ENCODE measurements at regions of chr17 and their contacts with region 1.

Region 1: DNA sequence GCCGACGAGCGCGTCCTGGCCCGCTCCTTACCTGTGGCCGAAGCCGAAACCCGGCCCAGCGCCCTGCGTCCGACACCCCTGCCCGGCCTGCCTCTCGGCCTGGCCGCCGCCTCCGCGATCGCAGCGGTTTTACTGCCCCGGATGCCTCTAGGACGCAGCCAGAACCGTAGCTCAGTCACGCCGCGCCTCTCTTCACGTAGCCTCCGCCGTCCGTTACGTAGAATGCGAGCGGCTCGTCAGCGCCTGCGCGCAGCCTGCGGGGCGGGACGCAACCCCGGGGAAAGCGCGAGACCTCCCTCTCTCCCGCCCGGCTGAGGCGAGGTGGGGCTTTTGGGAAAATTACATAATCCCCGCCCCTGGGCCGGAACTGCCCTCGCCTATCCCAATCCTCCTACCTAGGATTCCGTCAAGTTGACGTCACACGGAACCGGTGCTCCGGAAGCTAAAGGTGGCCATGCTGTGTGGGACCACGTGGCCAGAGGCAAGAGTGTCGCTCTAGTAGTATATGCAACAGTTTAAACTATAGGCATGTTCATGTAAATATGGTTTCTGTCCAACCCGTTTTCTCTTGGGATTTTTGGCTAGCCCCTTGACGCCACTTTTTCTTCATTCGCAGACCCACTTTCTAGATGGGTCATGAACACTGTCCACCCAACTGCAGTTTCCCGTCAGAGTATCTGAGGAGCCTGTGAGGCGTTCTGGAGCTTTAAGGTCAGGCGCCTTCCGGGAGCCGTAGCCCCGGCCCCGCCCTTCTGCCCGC is at the start of gene CCDC47:
- DNase-seq: peak; percentile 94 to 99 (median 97)
- ATAC-seq: peak; percentile 85
- H3K4me3 ChIP-seq: peak within 1 kb of the TSS; percentile 84
- H3K27ac ChIP-seq: peak within 1 kb of the TSS; percentile 99
- H3K4me1 ChIP-seq: peaks cover 9 to 24% of the 10 kb centered on the region in 2 experiments
- H3K27me3 ChIP-seq: no peaks in the 10 kb centered on the region
- CTCF ChIP-seq: peak in 1 of 3 experiments; percentile 19; a peak in 1 of 6 replicates
- EP300 ChIP-seq: peak; percentile 23; the same call in 1 of the 2 replicates
- POLR2A ChIP-seq: peak; percentile 91
- RAD21 ChIP-seq: no peak
- polyA plus RNA-seq, gene CCDC47: 15.5 to 20.5 TPM

Region 2: GRCh38 chr17:63549946-63550807 is 223.4 kb before region 1 on chr17 and contains the start of gene DCAF7:
- CTCF ChIA-PET with region 1: no interaction called
- POLR2A ChIA-PET with region 1: interaction called, 4 read pairs
- in situ Hi-C with region 1: no loop called
- intact Hi-C with region 1: loop called (anchors 5 kb)
- DNase-seq: peak; percentile 99 to 100 (median 100)
- ATAC-seq: peak; percentile 92
- H3K4me3 ChIP-seq: peak within 1 kb of the TSS; percentile 85
- H3K27ac ChIP-seq: peak within 1 kb of the TSS; percentile 97
- H3K4me1 ChIP-seq: peaks cover 12 to 22% of the 10 kb centered on the region in 2 experiments
- H3K27me3 ChIP-seq: no peaks in the 10 kb centered on the region
- CTCF ChIP-seq: peak in 1 of 3 experiments; percentile 5; a peak in 1 of 6 replicates
- EP300 ChIP-seq: no peak
- POLR2A ChIP-seq: peak; percentile 90
- RAD21 ChIP-seq: no peak
- polyA plus RNA-seq, gene DCAF7: 35.9 to 38.0 TPM

Region 3: GRCh38 chr17:63741221-63742049 is 32.1 kb before region 1 on chr17 and contains the start of gene STRADA:
- CTCF ChIA-PET with region 1: no interaction called
- POLR2A ChIA-PET with region 1: interaction called, 33 read pairs
- in situ Hi-C with region 1: no loop called
- intact Hi-C with region 1: loop called (anchors 2 kb)
- DNase-seq: peak; percentile 97 to 99 (median 98)
- ATAC-seq: peak; percentile 96
- H3K4me3 ChIP-seq: peak within 1 kb of the TSS; percentile 84
- H3K27ac ChIP-seq: peak within 1 kb of the TSS; percentile 87
- H3K4me1 ChIP-seq: peaks cover 4 to 18% of the 10 kb centered on the region in 2 experiments; a peak in 3 of 5 replicates
- H3K27me3 ChIP-seq: no peaks in the 10 kb centered on the region
- CTCF ChIP-seq: no peak
- EP300 ChIP-seq: no peak
- POLR2A ChIP-seq: peak; percentile 88
- RAD21 ChIP-seq: peak in 1 of 2 experiments; percentile 15; a peak in 2 of 4 replicates
- polyA plus RNA-seq, gene STRADA: 6.6 to 12.5 TPM

Region 4: DNA sequence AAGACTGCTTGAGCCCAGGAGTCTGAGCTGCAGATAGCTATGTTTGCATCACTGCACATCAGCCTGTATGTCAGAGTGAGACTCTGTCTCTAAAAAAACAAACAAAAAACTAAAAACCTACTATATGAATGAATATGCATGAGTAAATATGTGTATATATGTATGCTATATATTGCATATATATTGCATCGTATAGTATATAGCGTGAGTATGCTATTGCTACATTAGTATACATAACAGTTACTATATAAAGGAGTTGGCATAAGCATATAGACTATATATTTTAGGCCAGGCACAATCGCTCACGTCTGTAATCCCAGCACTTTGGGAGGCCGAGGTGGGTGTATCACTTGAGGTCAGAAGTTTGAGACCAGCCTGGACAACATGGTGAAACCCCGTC is 16.5 kb after region 1 on chr17:
- CTCF ChIA-PET with region 1: no interaction called
- POLR2A ChIA-PET with region 1: interaction called, 82 read pairs
- in situ Hi-C with region 1: no loop called
- intact Hi-C with region 1: no loop called
- DNase-seq: no peak
- ATAC-seq: no peak
- H3K4me3 ChIP-seq: no peak overlapping the region
- H3K27ac ChIP-seq: no peak overlapping the region
- H3K4me1 ChIP-seq: no peaks in the 10 kb centered on the region
- H3K27me3 ChIP-seq: no peaks in the 10 kb centered on the region
- CTCF ChIP-seq: no peak
- EP300 ChIP-seq: no peak
- POLR2A ChIP-seq: no peak
- RAD21 ChIP-seq: no peak

Region 5: DNA sequence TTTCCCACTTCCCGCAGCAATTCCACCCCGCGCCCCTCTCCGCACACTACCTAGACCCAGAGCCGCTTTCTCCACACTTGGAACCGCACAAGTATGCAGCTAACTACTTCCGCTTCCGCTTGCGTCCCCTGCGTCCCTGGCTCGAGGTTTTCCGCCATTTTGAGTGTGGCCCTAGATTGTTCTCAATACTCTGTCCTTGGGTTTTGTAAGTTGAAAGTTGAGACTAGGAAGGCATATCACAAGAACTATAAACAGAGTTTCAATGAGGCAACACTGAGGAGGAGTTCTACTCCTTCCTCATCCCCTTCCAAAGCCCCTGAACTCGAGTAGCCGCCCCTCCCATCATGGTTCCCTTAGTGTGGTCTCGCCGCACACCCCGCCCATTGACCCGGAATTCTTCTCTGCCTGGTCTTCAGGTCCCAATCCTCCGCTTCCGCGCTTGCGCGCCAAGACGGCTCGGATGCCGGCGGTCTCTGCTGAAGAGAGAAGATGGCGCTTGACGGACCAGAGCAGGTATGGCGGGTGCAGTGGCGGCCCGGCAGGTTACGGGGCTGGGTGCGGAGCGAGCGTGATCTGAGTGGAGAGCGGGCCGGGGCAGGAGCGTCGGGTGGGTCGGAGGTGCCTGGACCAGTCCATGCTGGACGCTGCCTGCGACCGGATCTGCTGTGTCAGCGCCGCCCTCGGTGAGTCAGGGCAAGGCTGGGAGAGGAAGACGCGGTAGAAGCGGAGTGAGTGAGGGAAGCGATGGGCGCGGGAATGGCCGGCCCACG is 53.6 kb after region 1 on chr17 and contains the starts of genes FTSJ3 and PSMC5:
- CTCF ChIA-PET with region 1: no interaction called
- POLR2A ChIA-PET with region 1: interaction called, 16 read pairs
- in situ Hi-C with region 1: no loop called
- intact Hi-C with region 1: no loop called
- DNase-seq: peak; percentile 82 to 97 (median 88)
- ATAC-seq: peak; percentile 94
- H3K4me3 ChIP-seq: peak within 1 kb of the TSS; percentile 92
- H3K27ac ChIP-seq: peak within 1 kb of the TSS; percentile 100
- H3K4me1 ChIP-seq: peaks cover 0 to 16% of the 10 kb centered on the region in 2 experiments; a peak in 3 of 5 replicates
- H3K27me3 ChIP-seq: no peaks in the 10 kb centered on the region
- CTCF ChIP-seq: peak; percentile 62 to 71 (median 68)
- EP300 ChIP-seq: no peak
- POLR2A ChIP-seq: peak; percentile 95
- RAD21 ChIP-seq: peak; percentile 25 to 32; a peak in 1 of 4 replicates
- polyA plus RNA-seq, gene FTSJ3: 18.0 to 49.3 TPM
- polyA plus RNA-seq, gene PSMC5: 159 to 393 TPM

Region 6: GRCh38 chr17:64145757-64146417 is 372.3 kb after region 1 on chr17:
- CTCF ChIA-PET with region 1: no interaction called
- POLR2A ChIA-PET with region 1: no interaction called
- in situ Hi-C with region 1: no loop called
- intact Hi-C with region 1: loop called (anchors 10 kb)
- DNase-seq: peak; percentile 92 to 99 (median 94)
- ATAC-seq: peak; percentile 94
- H3K4me3 ChIP-seq: peak overlapping the region; percentile 64
- H3K27ac ChIP-seq: peak overlapping the region; percentile 93
- H3K4me1 ChIP-seq: peaks cover 9 to 17% of the 10 kb centered on the region in 2 experiments; a peak in 4 of 5 replicates
- H3K27me3 ChIP-seq: no peaks in the 10 kb centered on the region
- CTCF ChIP-seq: peak in 2 of 3 experiments; percentile 9 to 13; a peak in 1 of 6 replicates
- EP300 ChIP-seq: peak; percentile 2; the same call in 1 of the 2 replicates
- POLR2A ChIP-seq: peak; percentile 99
- RAD21 ChIP-seq: no peak

Measured in K562 (cell line).